Panc1 (cell line): ENCODE measurements at regions of chr1 and their contacts with region 1.

Region 1: GRCh38 chr1:11893907-11894251 is 32.3 kb downstream of the KIAA2013 start:
- DNase-seq: peak; percentile 35
- ATAC-seq: peak; percentile 90
- H3K4me3 ChIP-seq: no peak overlapping the region
- H3K27ac ChIP-seq: no peak overlapping the region
- H3K4me1 ChIP-seq: no peaks in the 10 kb centered on the region
- H3K27me3 ChIP-seq: no peaks in the 10 kb centered on the region
- CTCF ChIP-seq: peak; percentile 95

Region 2: GRCh38 chr1:11838349-11839272 is 55.3 kb before region 1 on chr1:
- CTCF ChIA-PET with region 1: interaction called, 6 read pairs
- POLR2A ChIA-PET with region 1: no interaction called
- in situ Hi-C with region 1: no loop called
- intact Hi-C with region 1: loop called (anchors 2 kb)
- DNase-seq: peak; percentile 51
- ATAC-seq: peak; percentile 93
- H3K4me3 ChIP-seq: no peak overlapping the region
- H3K27ac ChIP-seq: no peak overlapping the region
- H3K4me1 ChIP-seq: no peaks in the 10 kb centered on the region
- H3K27me3 ChIP-seq: no peaks in the 10 kb centered on the region
- CTCF ChIP-seq: peak; percentile 100